Activated naive CD4-positive, alpha-beta T cell treated with anti-CD3 and anti-CD28 coated beads for 36 hours (primary cell): ENCODE measurements at regions of chr2 and their contacts with region 1.

Region 1: GRCh38 chr2:136238286-136239078 is 120.5 kb upstream of the CXCR4 start:
- DNase-seq: peak; percentile 49
- H3K4me3 Mint-ChIP-seq: peak overlapping the region; percentile 10
- H3K27ac Mint-ChIP-seq: peak overlapping the region; percentile 77
- H3K4me1 Mint-ChIP-seq: peaks cover 39% of the 10 kb centered on the region
- H3K27me3 Mint-ChIP-seq: no peaks in the 10 kb centered on the region

Region 2: GRCh38 chr2:135985018-135985825 is 253.3 kb before region 1 on chr2 and contains the start of gene DARS1:
- CTCF ChIA-PET with region 1: no interaction called
- intact Hi-C with region 1: loop called (anchors 2 kb)
- DNase-seq: peak; percentile 90
- H3K4me3 Mint-ChIP-seq: peak within 1 kb of the TSS; percentile 95
- H3K27ac Mint-ChIP-seq: peak within 1 kb of the TSS; percentile 97
- H3K4me1 Mint-ChIP-seq: peaks cover 39% of the 10 kb centered on the region
- H3K27me3 Mint-ChIP-seq: no peaks in the 10 kb centered on the region
- total RNA-seq, gene DARS1: 161 to 177 TPM

Region 3: GRCh38 chr2:136207030-136207623 is 31.4 kb before region 1 on chr2:
- CTCF ChIA-PET with region 1: no interaction called
- intact Hi-C with region 1: loop called (anchors 1 kb)
- DNase-seq: peak; percentile 61
- H3K4me3 Mint-ChIP-seq: no peak overlapping the region
- H3K27ac Mint-ChIP-seq: peak overlapping the region; percentile 86
- H3K4me1 Mint-ChIP-seq: peaks cover 37% of the 10 kb centered on the region
- H3K27me3 Mint-ChIP-seq: no peaks in the 10 kb centered on the region

Region 4: GRCh38 chr2:136281281-136282114 is 43.0 kb after region 1 on chr2:
- CTCF ChIA-PET with region 1: no interaction called
- intact Hi-C with region 1: loop called (anchors 1 kb)
- DNase-seq: peak; percentile 73
- H3K4me3 Mint-ChIP-seq: no peak overlapping the region
- H3K27ac Mint-ChIP-seq: peak overlapping the region; percentile 74
- H3K4me1 Mint-ChIP-seq: peaks cover 43% of the 10 kb centered on the region
- H3K27me3 Mint-ChIP-seq: no peaks in the 10 kb centered on the region

Region 5: DNA sequence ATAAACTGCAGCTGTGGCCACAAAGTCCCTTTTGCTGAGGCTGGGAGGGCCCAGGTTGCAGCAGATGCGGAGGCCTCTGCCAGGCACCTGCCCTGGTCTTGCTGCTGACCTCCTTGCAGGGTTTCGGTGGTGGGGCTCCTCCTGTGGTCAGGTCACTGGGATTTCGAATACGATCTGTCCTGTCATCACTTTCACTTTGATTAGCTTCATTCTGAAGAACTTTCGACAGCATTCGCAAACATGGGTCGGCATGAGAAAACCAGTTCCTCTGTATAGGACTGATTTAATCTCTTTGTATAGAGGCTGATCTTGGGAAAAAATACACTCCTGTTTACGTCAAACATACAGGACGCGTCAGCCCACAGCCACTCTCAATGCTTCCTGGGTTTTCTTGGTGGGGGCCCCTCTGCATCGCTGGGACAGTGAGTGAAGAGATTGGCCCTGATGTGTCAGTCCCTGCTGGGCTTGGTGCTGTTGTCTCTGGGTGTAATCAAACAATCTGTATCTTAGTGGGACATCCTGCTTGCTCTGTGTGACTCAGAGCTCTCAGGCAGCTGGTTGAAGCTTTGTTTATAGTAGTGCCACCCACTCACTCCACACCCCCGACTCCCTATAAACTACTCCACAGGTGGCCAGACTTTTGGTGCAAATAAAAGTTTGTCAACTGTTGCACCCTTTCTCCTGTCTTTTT is 88.8 kb after region 1 on chr2:
- CTCF ChIA-PET with region 1: interaction called, 3 read pairs
- intact Hi-C with region 1: loop called (anchors 1 kb)
- DNase-seq: peak; percentile 89
- H3K4me3 Mint-ChIP-seq: peak overlapping the region; percentile 52
- H3K27ac Mint-ChIP-seq: peak overlapping the region; percentile 82
- H3K4me1 Mint-ChIP-seq: peaks cover 62% of the 10 kb centered on the region
- H3K27me3 Mint-ChIP-seq: no peaks in the 10 kb centered on the region